ENCODE measurements at regions of chr4 and their contacts with region 1.

Region 1: DNA sequence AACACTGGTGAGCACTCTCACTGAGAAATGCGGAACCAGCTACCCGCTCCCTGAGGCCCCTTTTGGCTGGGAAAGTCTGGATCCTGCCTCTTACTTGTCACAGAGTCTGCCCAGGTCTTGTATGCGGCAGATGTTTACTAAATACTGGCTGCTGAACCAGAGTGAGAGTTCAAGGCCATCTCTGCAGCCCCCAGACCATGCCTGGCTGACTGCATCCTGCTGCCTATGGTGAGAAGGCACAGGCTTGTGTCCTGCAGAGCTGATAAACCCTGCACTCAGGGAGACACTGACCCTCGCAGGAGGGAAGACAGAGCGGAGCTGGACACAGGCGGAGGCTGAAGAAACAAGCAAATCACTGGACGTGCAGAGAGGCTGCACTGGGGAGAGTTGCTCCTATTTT is 46.5 kb downstream of the JAKMIP1 start:
- DNase-seq: no peak
- H3K4me3 ChIP-seq: no peak overlapping the region
- H3K27ac ChIP-seq: no peak overlapping the region
- H3K4me1 ChIP-seq: no peaks in the 10 kb centered on the region
- H3K27me3 ChIP-seq: no peaks in the 10 kb centered on the region
- CTCF ChIP-seq: no peak
- POLR2A ChIP-seq: no peak

Region 2: DNA sequence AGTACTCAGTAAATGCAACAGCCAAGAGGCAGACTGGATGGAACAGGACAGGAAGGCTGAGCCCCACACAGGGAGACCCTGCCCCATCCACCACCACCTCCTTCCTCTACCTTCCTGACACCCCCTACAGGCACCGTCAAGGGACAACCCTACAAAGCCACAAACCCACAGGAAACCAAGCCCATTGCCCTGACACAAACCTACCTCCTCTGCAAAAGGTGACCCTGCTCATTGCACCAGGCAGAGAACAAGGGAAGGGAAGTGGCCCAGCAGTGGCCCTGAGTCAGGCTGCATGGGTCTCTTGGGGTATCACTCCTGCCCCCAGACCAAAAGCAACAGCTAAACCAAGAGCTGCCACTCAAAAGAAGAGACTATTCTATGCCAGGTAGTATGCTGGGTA is 25.5 kb after region 1 on chr4:
- CTCF ChIA-PET with region 1: no interaction called
- POLR2A ChIA-PET with region 1: no interaction called
- dilution Hi-C with region 1: no loop called
- intact Hi-C with region 1: loop called (anchors 1 kb)
- DNase-seq: no peak
- H3K4me3 ChIP-seq: no peak overlapping the region
- H3K27ac ChIP-seq: no peak overlapping the region
- H3K4me1 ChIP-seq: no peaks in the 10 kb centered on the region
- H3K27me3 ChIP-seq: no peaks in the 10 kb centered on the region
- CTCF ChIP-seq: no peak
- POLR2A ChIP-seq: no peak

Measured in endothelial cell of umbilical vein (primary cell).